Activated CD8-positive, alpha-beta T cell treated with anti-CD3 and anti-CD28 coated beads for 36 hours (primary cell): ENCODE measurements at regions of chr3 and their contacts with region 1.

Region 1: GRCh38 chr3:11288786-11289682 is 16.8 kb downstream of the ATG7 start:
- DNase-seq: peak; percentile 55
- ATAC-seq: peak; percentile 50
- H3K4me3 Mint-ChIP-seq: peak overlapping the region; percentile 44
- H3K27ac Mint-ChIP-seq: peak overlapping the region; percentile 89
- H3K4me1 Mint-ChIP-seq: peaks cover 58% of the 10 kb centered on the region
- H3K27me3 Mint-ChIP-seq: no peaks in the 10 kb centered on the region
- CTCF ChIP-seq: no peak

Region 2: DNA sequence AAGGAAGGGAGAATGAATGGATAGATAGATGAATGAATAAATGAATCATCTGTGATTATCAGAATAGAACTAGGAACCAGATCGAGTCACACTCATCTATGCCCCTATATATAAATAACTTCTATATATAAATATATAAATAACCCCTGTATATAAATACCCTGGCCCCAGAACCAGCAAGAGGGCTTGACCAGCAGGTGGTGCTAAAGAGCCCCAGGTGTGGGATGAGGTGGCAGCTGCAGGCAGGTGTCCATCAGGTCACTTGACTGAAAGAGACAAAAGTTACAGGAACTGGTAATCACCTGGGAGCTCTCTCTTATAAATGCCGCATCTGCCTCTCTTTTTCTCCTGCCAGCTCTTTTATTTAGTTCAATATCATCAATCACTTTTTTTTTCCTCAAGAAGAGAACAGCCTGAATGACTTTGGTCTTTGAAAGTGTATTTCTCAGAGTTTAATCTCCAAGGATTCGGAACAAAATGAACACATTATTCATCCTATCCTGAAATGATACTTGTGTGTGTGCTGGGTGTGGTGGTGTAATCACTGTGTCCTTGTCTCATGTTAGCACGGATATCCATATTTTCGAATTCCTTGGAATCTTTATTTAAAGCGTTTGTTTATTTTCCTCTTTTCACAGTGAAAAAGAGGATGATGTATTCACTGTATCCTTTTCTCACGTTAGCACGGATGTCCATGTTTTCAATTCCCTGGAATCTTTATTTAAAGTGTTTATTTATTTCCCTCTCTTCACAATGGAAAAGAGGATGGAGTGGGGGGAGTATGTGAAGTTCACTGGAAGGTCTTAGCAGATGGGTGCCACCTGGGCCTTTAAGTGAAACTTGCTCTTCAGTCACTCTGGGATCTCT is 52.2 kb before region 1 on chr3:
- CTCF ChIA-PET with region 1: interaction called, 15 read pairs
- POLR2A ChIA-PET with region 1: interaction called, 4 read pairs
- intact Hi-C with region 1: loop called (anchors 2 kb)
- DNase-seq: peak; percentile 89
- ATAC-seq: no peak
- H3K4me3 Mint-ChIP-seq: no peak overlapping the region
- H3K27ac Mint-ChIP-seq: peak overlapping the region; percentile 30
- H3K4me1 Mint-ChIP-seq: peaks cover 39% of the 10 kb centered on the region
- H3K27me3 Mint-ChIP-seq: peaks cover 15% of the 10 kb centered on the region
- CTCF ChIP-seq: peak; percentile 90

Region 3: DNA sequence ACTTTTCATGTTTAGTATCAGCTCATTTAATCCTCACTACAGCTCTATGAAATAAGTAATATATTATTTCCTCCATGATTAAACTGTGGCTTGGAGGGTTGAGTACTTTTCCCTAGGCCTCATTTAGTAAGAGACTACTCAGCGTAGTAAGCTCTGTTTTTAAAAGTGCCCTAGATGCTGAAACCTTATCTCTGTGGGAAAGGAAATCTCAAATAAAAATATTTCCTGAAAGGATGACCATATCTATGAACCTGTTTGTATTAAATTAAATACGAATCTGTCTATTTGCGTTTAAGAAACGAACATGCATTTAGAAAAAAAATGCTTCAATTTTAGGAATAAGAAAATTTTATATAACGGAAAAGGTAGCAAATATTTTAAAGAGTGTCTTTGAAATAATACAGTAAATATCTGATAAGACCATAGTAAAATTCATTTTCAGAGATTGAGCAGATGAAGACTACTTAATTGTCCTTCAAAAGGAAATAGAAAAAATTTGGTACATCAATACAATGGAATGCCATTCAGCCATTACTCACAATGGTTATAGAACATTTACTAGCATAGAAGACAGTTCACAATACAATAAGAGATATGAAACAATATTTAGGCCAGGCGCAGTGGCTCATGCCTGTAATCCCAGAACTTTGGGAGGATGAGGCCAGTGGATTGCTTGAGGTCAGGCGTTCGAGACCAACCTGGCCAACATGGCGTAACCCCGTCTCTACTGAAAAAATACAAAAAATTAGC is 39.3 kb after region 1 on chr3:
- CTCF ChIA-PET with region 1: no interaction called
- POLR2A ChIA-PET with region 1: no interaction called
- intact Hi-C with region 1: no loop called
- DNase-seq: no peak
- ATAC-seq: no peak
- H3K4me3 Mint-ChIP-seq: no peak overlapping the region
- H3K27ac Mint-ChIP-seq: no peak overlapping the region
- H3K4me1 Mint-ChIP-seq: peaks cover 11% of the 10 kb centered on the region
- H3K27me3 Mint-ChIP-seq: no peaks in the 10 kb centered on the region
- CTCF ChIP-seq: no peak

Region 4: GRCh38 chr3:11438646-11439045 is 149.6 kb after region 1 on chr3:
- CTCF ChIA-PET with region 1: no interaction called
- POLR2A ChIA-PET with region 1: no interaction called
- intact Hi-C with region 1: no loop called
- DNase-seq: no peak
- ATAC-seq: no peak
- H3K4me3 Mint-ChIP-seq: no peak overlapping the region
- H3K27ac Mint-ChIP-seq: no peak overlapping the region
- H3K4me1 Mint-ChIP-seq: no peaks in the 10 kb centered on the region
- H3K27me3 Mint-ChIP-seq: no peaks in the 10 kb centered on the region
- CTCF ChIP-seq: no peak

Region 5: GRCh38 chr3:11548721-11549131 is 259.7 kb after region 1 on chr3:
- CTCF ChIA-PET with region 1: no interaction called
- POLR2A ChIA-PET with region 1: no interaction called
- intact Hi-C with region 1: no loop called
- DNase-seq: no peak
- ATAC-seq: no peak
- H3K4me3 Mint-ChIP-seq: no peak overlapping the region
- H3K27ac Mint-ChIP-seq: no peak overlapping the region
- H3K4me1 Mint-ChIP-seq: peaks cover 8% of the 10 kb centered on the region
- H3K27me3 Mint-ChIP-seq: no peaks in the 10 kb centered on the region
- CTCF ChIP-seq: no peak